ENCODE measurements at regions of chr9 and their contacts with region 1.

Region 1: GRCh38 chr9:37215830-37216229 is 95.5 kb downstream of the ZCCHC7 start:
- DNase-seq: no peak
- ATAC-seq: no peak
- H3K4me3 ChIP-seq: no peak overlapping the region
- H3K4me3 Mint-ChIP-seq: no peak overlapping the region
- H3K27ac ChIP-seq: no peak overlapping the region
- H3K27ac Mint-ChIP-seq: no peak overlapping the region
- H3K4me1 ChIP-seq: no peaks in the 10 kb centered on the region
- H3K4me1 Mint-ChIP-seq: peaks cover 23% of the 10 kb centered on the region
- H3K27me3 ChIP-seq: no peaks in the 10 kb centered on the region
- H3K27me3 Mint-ChIP-seq: no peaks in the 10 kb centered on the region
- CTCF ChIP-seq: no peak

Region 2: DNA sequence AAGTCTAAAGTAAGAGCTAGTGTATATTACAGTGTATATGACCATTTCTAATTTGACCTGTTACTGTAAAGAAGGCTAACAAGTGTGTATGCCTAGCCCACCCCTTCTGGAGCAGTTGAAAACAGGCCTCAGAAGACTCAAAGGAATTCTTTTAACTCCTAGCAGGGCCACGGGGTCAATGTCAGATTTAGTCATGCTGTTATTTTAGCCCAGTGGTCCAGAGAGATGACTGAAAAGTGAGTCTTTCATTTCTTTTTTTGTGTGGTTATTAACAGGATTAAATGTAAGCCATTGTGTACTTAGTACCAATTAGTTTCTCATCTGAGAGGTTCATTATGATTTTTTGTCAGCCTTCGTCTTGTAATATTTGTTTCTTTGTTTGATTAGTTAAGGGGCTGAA is 71.1 kb before region 1 on chr9:
- CTCF ChIA-PET with region 1: no interaction called
- POLR2A ChIA-PET with region 1: no interaction called
- intact Hi-C with region 1: loop called in 1 of 2 experiments (anchors 5 kb)
- DNase-seq: no peak
- ATAC-seq: no peak
- H3K4me3 ChIP-seq: no peak overlapping the region
- H3K4me3 Mint-ChIP-seq: peak overlapping the region; percentile 29
- H3K27ac ChIP-seq: peak overlapping the region in 1 of 2 experiments; percentile 22
- H3K27ac Mint-ChIP-seq: peak overlapping the region; percentile 85
- H3K4me1 ChIP-seq: peaks cover 36% of the 10 kb centered on the region
- H3K4me1 Mint-ChIP-seq: peaks cover 63% of the 10 kb centered on the region
- H3K27me3 ChIP-seq: no peaks in the 10 kb centered on the region
- H3K27me3 Mint-ChIP-seq: no peaks in the 10 kb centered on the region
- CTCF ChIP-seq: no peak

Measured in CD8-positive, alpha-beta T cell (primary cell).